Activated T-helper 2 cell treated with anti-CD3 and anti-CD28 coated beads, Interferon-gamma antibody, Interleukin-2, Interleukin-4, amounts not matched to agents 10 μg/mL and 5 μg/mL and 100 μg/mL, durations not matched to agents 14 hours and 24 hours and 36 hours (primary cell): ENCODE measurements at regions of chr14 and their contacts with region 1.

Region 1: DNA sequence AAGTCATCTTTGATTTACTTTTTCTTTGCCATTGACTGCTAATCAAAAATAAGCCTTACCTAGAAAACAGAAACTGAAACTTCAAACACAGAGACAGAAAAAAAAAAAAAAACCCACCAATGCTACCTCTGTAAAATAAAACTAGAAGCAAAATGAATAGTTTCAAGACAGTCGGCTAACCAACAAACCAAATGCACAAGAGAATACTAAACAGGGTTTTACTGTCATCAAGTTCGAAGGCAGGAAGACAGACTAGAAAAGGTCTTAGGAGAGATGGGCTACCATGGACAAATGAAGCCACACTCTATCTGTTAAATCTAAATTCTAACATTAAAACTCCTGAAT is 59.5 kb downstream of the SEL1L start:
- DNase-seq: no peak
- H3K4me3 Mint-ChIP-seq: peak overlapping the region; percentile 62
- H3K27ac Mint-ChIP-seq: peak overlapping the region; percentile 66
- H3K4me1 Mint-ChIP-seq: peaks cover 50% of the 10 kb centered on the region
- H3K27me3 Mint-ChIP-seq: no peaks in the 10 kb centered on the region

Region 2: DNA sequence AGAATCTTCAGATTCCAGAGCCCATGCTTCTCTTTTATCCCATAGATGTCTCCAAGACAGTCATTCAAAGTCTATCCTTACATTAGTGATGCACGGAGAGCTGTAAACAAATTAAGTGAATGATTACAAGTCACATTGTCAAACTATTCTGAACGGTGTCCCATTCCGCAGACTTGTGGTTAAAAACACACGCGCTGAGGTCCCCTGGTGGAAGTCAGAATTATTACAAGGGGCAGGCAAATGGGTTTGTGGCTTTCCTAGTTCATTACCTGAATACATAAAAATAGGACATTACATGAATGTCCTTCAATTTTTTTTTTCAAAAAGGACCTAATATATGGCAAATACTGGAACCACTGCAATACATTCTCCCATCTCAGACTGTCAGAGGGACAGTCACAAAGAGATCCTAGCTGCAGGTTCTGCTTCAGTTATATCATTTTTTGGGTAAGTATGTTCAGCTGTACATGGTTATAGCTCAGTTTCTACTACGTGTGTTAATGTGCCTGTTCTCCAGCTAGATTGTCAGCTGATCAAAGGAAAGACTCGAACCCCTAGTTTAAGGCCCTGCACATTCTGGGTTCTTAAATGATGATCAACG is 20.9 kb before region 1 on chr14:
- intact Hi-C with region 1: no loop called
- DNase-seq: peak; percentile 23
- H3K4me3 Mint-ChIP-seq: no peak overlapping the region
- H3K27ac Mint-ChIP-seq: no peak overlapping the region
- H3K4me1 Mint-ChIP-seq: peaks cover 3% of the 10 kb centered on the region
- H3K27me3 Mint-ChIP-seq: peaks cover 5% of the 10 kb centered on the region

Region 3: GRCh38 chr14:81519200-81520011 is 45.3 kb after region 1 on chr14:
- intact Hi-C with region 1: loop called (anchors 5 kb)
- DNase-seq: no peak
- H3K4me3 Mint-ChIP-seq: peak overlapping the region; percentile 13
- H3K27ac Mint-ChIP-seq: peak overlapping the region; percentile 70
- H3K4me1 Mint-ChIP-seq: peaks cover 22% of the 10 kb centered on the region
- H3K27me3 Mint-ChIP-seq: no peaks in the 10 kb centered on the region